Endothelial cell of umbilical vein (primary cell): ENCODE measurements at regions of chr4 and their contacts with region 1.

Region 1: DNA sequence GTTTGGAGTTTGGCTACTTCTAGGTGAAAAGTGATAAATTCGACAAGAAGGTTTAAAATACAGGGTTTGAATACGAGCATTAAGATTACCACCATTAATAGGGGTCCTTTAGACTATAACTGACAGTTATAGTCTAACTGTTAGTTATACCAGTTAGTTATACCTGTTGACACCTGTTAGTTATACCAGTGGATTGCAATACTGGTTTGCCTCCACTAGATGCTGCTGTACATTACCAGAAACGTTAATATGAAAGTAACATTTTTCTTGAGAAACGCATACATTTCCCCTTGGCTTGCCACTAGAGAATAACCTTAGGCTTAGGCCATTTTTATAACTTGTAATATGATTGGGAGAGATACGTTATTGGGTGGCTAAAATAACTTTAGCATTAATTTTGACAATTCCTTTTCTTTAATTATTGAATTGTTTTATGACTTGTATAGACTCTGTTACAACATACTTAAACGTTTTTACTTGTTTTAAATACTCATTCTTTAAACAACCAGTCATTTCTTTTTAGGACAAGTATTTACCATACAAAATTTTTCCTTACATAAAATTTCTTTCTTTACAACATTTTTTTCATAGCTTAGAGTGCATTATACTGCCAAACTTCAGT is 911.2 kb downstream of the FSTL5 start:
- DNase-seq: peak; percentile 53
- H3K4me3 ChIP-seq: no peak overlapping the region
- H3K27ac ChIP-seq: no peak overlapping the region
- H3K4me1 ChIP-seq: no peaks in the 10 kb centered on the region
- H3K27me3 ChIP-seq: no peaks in the 10 kb centered on the region
- CTCF ChIP-seq: peak; percentile 57 to 70
- POLR2A ChIP-seq: no peak

Region 2: DNA sequence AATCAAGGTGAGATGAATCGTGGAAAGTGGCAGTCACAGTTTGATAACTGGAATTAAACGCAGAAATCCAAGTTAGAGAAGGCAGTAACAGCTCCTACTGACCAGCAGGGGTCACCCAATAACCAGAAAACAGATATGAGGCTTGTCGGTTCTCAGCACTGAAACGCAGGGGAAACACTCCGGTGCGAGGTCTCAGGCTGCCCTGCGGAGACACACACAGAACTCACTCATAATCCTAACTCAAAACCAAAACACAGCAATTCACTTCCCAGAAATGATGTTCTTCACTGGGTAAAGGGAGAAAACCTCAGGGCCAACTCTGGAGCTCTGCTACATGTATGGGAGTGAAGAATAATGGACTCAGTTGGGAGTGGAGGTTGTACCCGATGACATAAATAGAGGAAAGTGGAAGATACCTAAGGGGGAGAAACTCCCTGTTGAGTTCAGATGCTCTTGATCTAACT is 1765.3 kb before region 1 on chr4:
- CTCF ChIA-PET with region 1: interaction called, 6 read pairs
- POLR2A ChIA-PET with region 1: no interaction called
- dilution Hi-C with region 1: no loop called
- intact Hi-C with region 1: loop called (anchors 10 kb)
- DNase-seq: peak; percentile 65
- H3K4me3 ChIP-seq: no peak overlapping the region
- H3K27ac ChIP-seq: no peak overlapping the region
- H3K4me1 ChIP-seq: no peaks in the 10 kb centered on the region
- H3K27me3 ChIP-seq: peaks cover 18 to 29% of the 10 kb centered on the region in 2 experiments
- CTCF ChIP-seq: peak; percentile 68 to 70
- POLR2A ChIP-seq: no peak

Region 3: GRCh38 chr4:161564230-161564834 is 311.7 kb after region 1 on chr4:
- CTCF ChIA-PET with region 1: interaction called, 8 read pairs
- POLR2A ChIA-PET with region 1: no interaction called
- dilution Hi-C with region 1: no loop called
- intact Hi-C with region 1: loop called (anchors 10 kb)
- DNase-seq: peak; percentile 17
- H3K4me3 ChIP-seq: no peak overlapping the region
- H3K27ac ChIP-seq: no peak overlapping the region
- H3K4me1 ChIP-seq: peaks cover 27% of the 10 kb centered on the region
- H3K27me3 ChIP-seq: no peaks in the 10 kb centered on the region
- CTCF ChIP-seq: no peak
- POLR2A ChIP-seq: no peak

Region 4: GRCh38 chr4:161949946-161950725 is 697.5 kb after region 1 on chr4:
- CTCF ChIA-PET with region 1: interaction called, 16 read pairs
- POLR2A ChIA-PET with region 1: no interaction called
- dilution Hi-C with region 1: no loop called
- intact Hi-C with region 1: loop called (anchors 2 kb)
- DNase-seq: no peak
- H3K4me3 ChIP-seq: no peak overlapping the region
- H3K27ac ChIP-seq: no peak overlapping the region
- H3K4me1 ChIP-seq: no peaks in the 10 kb centered on the region
- H3K27me3 ChIP-seq: no peaks in the 10 kb centered on the region
- CTCF ChIP-seq: no peak
- POLR2A ChIP-seq: no peak

Region 5: GRCh38 chr4:162170509-162170908 is 917.9 kb after region 1 on chr4:
- CTCF ChIA-PET with region 1: interaction called, 23 read pairs
- POLR2A ChIA-PET with region 1: no interaction called
- dilution Hi-C with region 1: no loop called
- intact Hi-C with region 1: loop called (anchors 1 kb)
- DNase-seq: no peak
- H3K4me3 ChIP-seq: no peak overlapping the region
- H3K27ac ChIP-seq: no peak overlapping the region
- H3K4me1 ChIP-seq: no peaks in the 10 kb centered on the region
- H3K27me3 ChIP-seq: peaks cover 0 to 2% of the 10 kb centered on the region in 2 experiments
- CTCF ChIP-seq: no peak
- POLR2A ChIP-seq: no peak

Region 6: DNA sequence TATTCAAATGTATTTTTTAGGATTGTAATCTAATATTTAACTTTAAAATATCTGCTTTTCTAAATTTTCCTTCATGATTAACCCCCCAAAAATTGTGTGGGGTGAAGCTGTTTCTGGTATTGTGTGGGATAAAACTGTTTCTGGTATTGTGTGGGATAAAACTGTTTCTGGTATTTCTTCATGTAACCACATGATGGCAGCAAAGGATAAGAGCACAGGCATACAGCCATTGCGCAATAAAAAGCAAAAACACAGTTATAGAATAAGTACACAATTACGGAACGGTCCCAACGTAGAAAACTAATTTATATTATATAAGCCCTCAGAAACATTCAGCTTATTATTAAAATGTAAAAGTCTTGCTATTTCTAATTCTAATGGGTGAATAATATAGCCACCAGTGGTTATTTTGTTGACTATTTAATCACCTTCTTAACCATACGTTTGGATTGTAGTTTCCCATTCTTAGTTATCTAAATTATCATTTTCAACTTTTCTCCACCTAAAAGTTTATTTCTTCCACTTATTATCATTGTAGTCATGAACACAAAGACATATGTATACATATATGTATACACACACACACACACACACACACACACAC is 1245.0 kb after region 1 on chr4:
- CTCF ChIA-PET with region 1: no interaction called
- POLR2A ChIA-PET with region 1: no interaction called
- dilution Hi-C with region 1: no loop called
- intact Hi-C with region 1: loop called (anchors 10 kb)
- DNase-seq: peak; percentile 24
- H3K4me3 ChIP-seq: no peak overlapping the region
- H3K27ac ChIP-seq: no peak overlapping the region
- H3K4me1 ChIP-seq: no peaks in the 10 kb centered on the region
- H3K27me3 ChIP-seq: no peaks in the 10 kb centered on the region
- CTCF ChIP-seq: peak; percentile 30 to 44
- POLR2A ChIP-seq: no peak